Caco-2 (cell line): ENCODE measurements at regions of chr7 and their contacts with region 1.

Region 1: GRCh38 chr7:117666016-117666415 is 186.2 kb downstream of the CFTR start:
- DNase-seq: peak; percentile 65 to 66
- H3K4me3 ChIP-seq: no peak overlapping the region
- H3K4me3 Mint-ChIP-seq: peak overlapping the region; percentile 24
- H3K27ac Mint-ChIP-seq: peak overlapping the region; percentile 95
- H3K4me1 ChIP-seq: peaks cover 59% of the 10 kb centered on the region
- H3K4me1 Mint-ChIP-seq: peaks cover 59% of the 10 kb centered on the region
- H3K27me3 ChIP-seq: no peaks in the 10 kb centered on the region
- H3K27me3 Mint-ChIP-seq: no peaks in the 10 kb centered on the region
- CTCF ChIP-seq: no peak

Region 2: DNA sequence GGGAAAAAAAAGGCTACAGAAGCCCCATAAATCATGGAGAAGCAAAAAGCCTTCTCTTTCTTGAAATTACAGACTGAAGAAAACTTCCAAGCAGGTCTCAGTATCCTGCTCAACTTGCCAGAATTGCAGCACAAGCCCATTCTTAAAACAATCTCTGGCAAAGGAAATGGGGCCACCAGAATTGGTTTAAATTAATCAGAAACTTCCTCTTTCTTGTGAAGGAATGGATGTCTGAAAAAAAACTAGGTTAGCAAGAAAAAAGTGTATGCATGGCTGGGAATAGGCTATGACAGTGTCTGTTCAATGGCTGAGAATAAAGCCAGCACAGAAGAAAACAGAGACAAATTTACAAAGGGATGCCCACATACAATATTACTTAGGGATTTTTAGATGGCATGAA is 1694.5 kb before region 1 on chr7:
- CTCF ChIA-PET with region 1: no interaction called
- POLR2A ChIA-PET with region 1: no interaction called
- intact Hi-C with region 1: loop called (anchors 10 kb)
- DNase-seq: no peak
- H3K4me3 ChIP-seq: no peak overlapping the region
- H3K4me3 Mint-ChIP-seq: no peak overlapping the region
- H3K27ac Mint-ChIP-seq: peak overlapping the region; percentile 45
- H3K4me1 ChIP-seq: peaks cover 84% of the 10 kb centered on the region
- H3K4me1 Mint-ChIP-seq: peaks cover 48% of the 10 kb centered on the region
- H3K27me3 ChIP-seq: no peaks in the 10 kb centered on the region
- H3K27me3 Mint-ChIP-seq: no peaks in the 10 kb centered on the region
- CTCF ChIP-seq: no peak

Region 3: DNA sequence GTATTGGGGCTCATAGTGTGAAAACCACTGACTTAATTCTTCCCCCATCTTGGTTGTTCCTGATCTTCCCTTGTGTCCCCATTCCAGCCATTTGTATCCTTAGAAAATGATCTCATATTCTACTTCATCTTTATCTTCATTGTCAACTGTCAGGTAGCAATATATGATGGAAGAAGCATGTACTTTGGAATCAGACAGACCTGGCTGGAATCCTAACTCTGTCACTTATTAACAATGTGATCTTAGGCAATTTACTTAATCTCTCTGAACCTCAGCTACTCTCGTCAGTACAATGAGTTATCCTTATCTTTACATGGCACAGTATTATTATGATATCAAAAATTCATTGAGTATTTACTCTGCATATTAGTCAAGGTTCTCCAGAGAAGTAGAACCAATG is 176.1 kb before region 1 on chr7:
- CTCF ChIA-PET with region 1: no interaction called
- POLR2A ChIA-PET with region 1: no interaction called
- intact Hi-C with region 1: no loop called
- DNase-seq: peak; percentile 38 to 62
- H3K4me3 ChIP-seq: no peak overlapping the region
- H3K4me3 Mint-ChIP-seq: peak overlapping the region; percentile 47
- H3K27ac Mint-ChIP-seq: peak overlapping the region; percentile 31
- H3K4me1 ChIP-seq: peaks cover 70% of the 10 kb centered on the region
- H3K4me1 Mint-ChIP-seq: peaks cover 71% of the 10 kb centered on the region
- H3K27me3 ChIP-seq: no peaks in the 10 kb centered on the region
- H3K27me3 Mint-ChIP-seq: no peaks in the 10 kb centered on the region
- CTCF ChIP-seq: no peak

Region 4: DNA sequence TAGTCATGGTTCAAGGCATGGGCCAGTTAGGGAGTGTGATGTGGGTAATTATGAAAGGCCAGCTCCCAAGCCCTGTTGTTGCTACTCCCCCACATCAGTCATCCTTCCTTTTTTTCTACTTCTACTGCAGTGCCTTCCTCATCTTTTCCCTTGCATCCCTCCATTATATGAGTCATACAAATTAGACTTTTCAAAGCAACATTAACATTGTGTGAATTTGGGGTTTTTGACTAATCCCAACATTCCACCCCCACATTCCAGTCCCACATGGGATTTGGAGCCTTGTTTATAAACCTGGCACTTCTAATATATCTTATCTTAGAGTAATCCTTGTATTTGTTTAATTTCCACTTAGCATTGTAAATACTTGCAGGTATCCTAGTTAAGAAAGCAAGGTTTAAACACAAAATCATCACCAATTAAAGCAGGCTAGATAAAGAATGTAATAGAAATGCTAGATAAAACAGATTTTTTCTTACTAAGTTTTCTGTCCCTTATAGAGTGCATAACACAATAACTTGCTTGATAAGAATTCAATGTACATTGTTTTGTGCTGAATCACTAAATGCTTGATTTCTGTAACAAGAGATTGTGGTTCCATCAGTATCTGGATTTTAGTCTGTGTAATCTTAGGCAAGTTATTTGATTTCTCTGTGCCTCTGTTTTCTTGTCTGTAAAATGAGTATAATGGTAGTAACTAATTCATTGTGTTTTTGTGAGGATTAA is 20.4 kb before region 1 on chr7:
- CTCF ChIA-PET with region 1: no interaction called
- POLR2A ChIA-PET with region 1: no interaction called
- intact Hi-C with region 1: loop called (anchors 1 kb)
- DNase-seq: peak; percentile 59 to 60
- H3K4me3 ChIP-seq: no peak overlapping the region
- H3K4me3 Mint-ChIP-seq: no peak overlapping the region
- H3K27ac Mint-ChIP-seq: peak overlapping the region; percentile 72
- H3K4me1 ChIP-seq: peaks cover 36% of the 10 kb centered on the region
- H3K4me1 Mint-ChIP-seq: peaks cover 38% of the 10 kb centered on the region
- H3K27me3 ChIP-seq: no peaks in the 10 kb centered on the region
- H3K27me3 Mint-ChIP-seq: no peaks in the 10 kb centered on the region
- CTCF ChIP-seq: no peak

Region 5: DNA sequence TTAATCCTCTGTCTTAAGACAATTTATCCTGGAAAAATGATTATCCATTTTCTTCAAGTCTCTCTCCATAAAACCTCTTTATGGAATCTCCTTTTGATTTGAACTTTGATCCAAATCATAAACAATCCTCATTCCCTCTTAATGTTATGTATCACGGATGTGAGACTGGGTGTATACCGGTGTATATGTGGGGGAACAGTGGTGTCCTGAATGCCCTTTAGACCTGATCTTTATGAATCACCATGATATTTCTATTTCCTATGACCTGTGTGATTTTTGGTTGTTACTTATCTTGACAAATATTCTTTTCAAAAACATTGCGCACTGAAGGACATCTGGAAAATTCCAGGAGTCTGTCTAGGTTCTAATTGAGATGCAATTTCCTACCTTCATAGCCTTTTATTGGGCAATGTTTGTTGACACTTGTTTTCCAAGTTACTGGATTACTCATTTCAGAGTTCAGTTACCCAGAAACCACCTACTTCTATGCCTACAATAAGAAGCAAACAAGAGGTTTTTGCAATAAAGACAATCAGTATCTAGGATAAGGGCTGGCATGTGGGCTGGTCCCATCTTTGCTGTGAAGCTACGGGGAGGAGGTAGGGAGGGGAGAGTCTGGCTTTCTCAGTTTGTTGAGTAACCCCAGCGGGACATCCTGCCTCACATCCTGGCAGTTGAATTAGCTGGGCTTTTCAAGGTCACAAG is 16.8 kb after region 1 on chr7:
- CTCF ChIA-PET with region 1: interaction called, 3 read pairs
- POLR2A ChIA-PET with region 1: interaction called, 6 read pairs
- intact Hi-C with region 1: loop called (anchors 1 kb)
- DNase-seq: peak; percentile 85 to 89
- H3K4me3 ChIP-seq: no peak overlapping the region
- H3K4me3 Mint-ChIP-seq: no peak overlapping the region
- H3K27ac Mint-ChIP-seq: peak overlapping the region; percentile 67
- H3K4me1 ChIP-seq: peaks cover 54% of the 10 kb centered on the region
- H3K4me1 Mint-ChIP-seq: peaks cover 17% of the 10 kb centered on the region
- H3K27me3 ChIP-seq: no peaks in the 10 kb centered on the region
- H3K27me3 Mint-ChIP-seq: no peaks in the 10 kb centered on the region
- CTCF ChIP-seq: no peak